Activated CD8-positive, alpha-beta T cell treated with anti-CD3 and anti-CD28 coated beads for 36 hours (primary cell): ENCODE measurements at regions of chr12 and their contacts with region 1.

Region 1: DNA sequence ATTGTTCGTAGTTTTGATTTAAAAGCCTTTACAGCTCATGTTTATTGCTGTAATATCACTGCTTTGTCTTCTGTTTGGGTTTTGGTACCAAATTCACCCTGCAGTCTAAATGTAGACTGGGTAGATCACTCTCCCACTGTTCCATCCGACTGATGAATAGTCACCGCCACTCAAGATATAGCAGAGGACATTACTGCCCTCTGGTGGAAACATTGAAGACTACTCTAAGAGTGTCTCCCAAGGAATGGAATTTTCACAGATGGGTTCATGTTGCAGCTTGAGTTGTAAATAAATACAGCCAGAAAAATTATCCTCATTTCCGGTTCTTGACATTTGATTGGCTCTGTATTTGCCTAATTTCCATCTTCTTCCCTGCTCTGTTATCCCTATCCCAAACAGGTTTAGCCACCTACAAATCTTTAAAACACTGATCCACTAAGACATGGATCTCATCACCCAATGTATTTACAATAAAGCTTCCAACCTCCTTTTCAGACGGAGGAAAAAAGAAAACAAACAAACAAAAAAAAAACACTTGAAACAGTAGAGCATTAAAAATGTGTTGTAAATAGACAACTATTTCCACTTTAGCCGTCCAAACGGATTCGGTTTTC is 198.3 kb upstream of the CPNE8 start:
- DNase-seq: peak; percentile 5
- ATAC-seq: peak; percentile 68
- H3K4me3 Mint-ChIP-seq: no peak overlapping the region
- H3K27ac Mint-ChIP-seq: no peak overlapping the region
- H3K4me1 Mint-ChIP-seq: no peaks in the 10 kb centered on the region
- H3K27me3 Mint-ChIP-seq: no peaks in the 10 kb centered on the region
- CTCF ChIP-seq: peak; percentile 62

Region 2: DNA sequence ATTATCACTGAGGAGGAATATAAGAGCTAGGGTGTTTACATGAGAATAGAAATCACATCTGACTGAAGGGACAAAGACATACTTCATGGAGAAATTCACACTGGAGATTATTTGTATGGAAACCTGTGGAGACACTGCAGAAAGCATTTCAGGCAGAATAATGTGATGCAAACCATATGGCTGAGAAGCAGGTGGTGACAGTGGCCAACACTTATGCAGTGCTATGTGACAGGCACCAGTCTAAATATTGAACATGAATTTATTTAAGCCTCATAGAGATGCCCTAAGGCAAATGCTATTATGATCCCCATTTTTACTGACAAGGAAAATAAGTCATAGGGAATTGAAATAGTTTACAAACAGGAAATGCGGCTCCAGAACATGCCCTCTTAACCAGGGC is 770.8 kb before region 1 on chr12:
- CTCF ChIA-PET with region 1: no interaction called
- POLR2A ChIA-PET with region 1: no interaction called
- intact Hi-C with region 1: loop called (anchors 10 kb)
- DNase-seq: no peak
- ATAC-seq: no peak
- H3K4me3 Mint-ChIP-seq: no peak overlapping the region
- H3K27ac Mint-ChIP-seq: no peak overlapping the region
- H3K4me1 Mint-ChIP-seq: no peaks in the 10 kb centered on the region
- H3K27me3 Mint-ChIP-seq: no peaks in the 10 kb centered on the region
- CTCF ChIP-seq: no peak

Region 3: GRCh38 chr12:39157696-39158342 is 54.2 kb after region 1 on chr12:
- CTCF ChIA-PET with region 1: no interaction called
- POLR2A ChIA-PET with region 1: no interaction called
- intact Hi-C with region 1: no loop called
- DNase-seq: no peak
- ATAC-seq: no peak
- H3K4me3 Mint-ChIP-seq: no peak overlapping the region
- H3K27ac Mint-ChIP-seq: no peak overlapping the region
- H3K4me1 Mint-ChIP-seq: no peaks in the 10 kb centered on the region
- H3K27me3 Mint-ChIP-seq: no peaks in the 10 kb centered on the region
- CTCF ChIP-seq: no peak

Region 4: DNA sequence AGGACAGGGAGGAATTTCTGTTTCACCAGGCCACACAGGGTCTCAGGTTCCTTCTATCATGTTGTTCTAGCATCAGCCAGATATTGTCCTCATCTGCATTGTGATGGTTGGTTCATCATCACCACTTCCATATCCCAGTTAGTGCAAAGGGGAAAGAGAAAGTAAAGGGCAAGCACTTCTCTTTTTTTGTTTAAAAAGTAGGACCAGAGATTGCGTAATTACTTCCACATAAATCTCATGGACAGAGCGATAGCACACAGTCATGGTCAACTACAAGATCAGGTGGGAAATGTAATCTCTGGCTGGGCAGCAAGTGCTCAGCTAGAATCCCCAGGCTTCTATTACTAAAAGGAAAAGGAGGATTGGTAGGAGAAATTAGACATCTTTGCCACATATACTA is 184.2 kb after region 1 on chr12:
- CTCF ChIA-PET with region 1: no interaction called
- POLR2A ChIA-PET with region 1: no interaction called
- intact Hi-C with region 1: no loop called
- DNase-seq: no peak
- ATAC-seq: no peak
- H3K4me3 Mint-ChIP-seq: no peak overlapping the region
- H3K27ac Mint-ChIP-seq: no peak overlapping the region
- H3K4me1 Mint-ChIP-seq: no peaks in the 10 kb centered on the region
- H3K27me3 Mint-ChIP-seq: no peaks in the 10 kb centered on the region
- CTCF ChIP-seq: no peak